BJ (cell line): ENCODE measurements at regions of chr5 and their contacts with region 1.

Region 1: GRCh38 chr5:153974131-153974812 is 64.4 kb downstream of the FAM114A2 start:
- DNase-seq: no peak
- H3K4me3 ChIP-seq: no peak overlapping the region
- H3K27me3 ChIP-seq: peaks cover 3% of the 10 kb centered on the region; the same call in 1 of the 2 replicates
- CTCF ChIP-seq: peak; percentile 75

Region 2: GRCh38 chr5:153987306-153987705 is 13.0 kb after region 1 on chr5:
- CTCF ChIA-PET with region 1: interaction called, 66 read pairs
- POLR2A ChIA-PET with region 1: no interaction called
- DNase-seq: no peak
- H3K4me3 ChIP-seq: no peak overlapping the region
- H3K27me3 ChIP-seq: no peaks in the 10 kb centered on the region
- CTCF ChIP-seq: no peak

Region 3: DNA sequence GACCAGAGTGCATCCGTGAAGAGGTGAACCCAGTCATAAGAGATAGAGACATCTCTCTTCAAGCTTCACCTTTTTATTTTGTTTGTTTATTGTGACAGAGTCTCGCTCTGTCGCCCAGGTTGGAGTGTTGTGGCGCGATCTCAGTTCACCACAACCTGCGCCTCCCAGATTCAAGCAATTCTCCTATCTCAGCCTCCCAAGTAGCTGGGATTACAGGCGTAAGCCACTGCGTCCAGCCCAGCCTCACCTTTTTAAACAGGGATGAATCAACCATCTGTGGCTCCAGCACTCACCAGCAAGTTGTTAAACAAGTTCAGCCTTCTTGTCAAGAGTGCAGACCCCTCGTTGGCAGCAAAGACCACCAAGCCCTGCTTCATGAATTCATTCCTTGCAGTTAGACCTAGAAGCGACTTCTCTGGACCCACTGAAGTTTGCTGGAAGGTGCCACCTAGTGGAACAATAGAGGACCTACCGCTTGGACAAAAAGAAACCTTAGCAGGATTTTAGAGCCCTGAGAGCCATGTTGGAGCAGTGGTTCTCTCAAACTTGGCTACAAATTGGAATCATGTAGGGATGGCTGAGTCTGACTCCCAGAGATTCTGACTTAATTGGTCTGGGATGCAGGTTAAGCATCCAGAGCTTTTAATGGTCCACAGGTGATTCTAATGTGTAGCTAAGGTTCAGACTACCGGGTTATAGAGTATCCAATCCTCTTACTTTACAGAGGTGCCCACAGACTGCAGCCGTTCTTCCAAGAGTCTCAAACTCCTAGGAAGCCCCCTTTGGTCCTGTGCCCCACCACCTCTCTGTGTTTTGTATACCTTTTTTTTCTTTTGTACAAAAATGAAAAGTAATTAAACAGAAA is 205.8 kb after region 1 on chr5:
- CTCF ChIA-PET with region 1: interaction called, 20 read pairs
- POLR2A ChIA-PET with region 1: no interaction called
- DNase-seq: no peak
- H3K4me3 ChIP-seq: no peak overlapping the region
- H3K27me3 ChIP-seq: 0 out of 2 replicates have a peak, but pooled peaks cover under 1% of the 10 kb centered on the region
- CTCF ChIP-seq: peak; percentile 87

Region 4: DNA sequence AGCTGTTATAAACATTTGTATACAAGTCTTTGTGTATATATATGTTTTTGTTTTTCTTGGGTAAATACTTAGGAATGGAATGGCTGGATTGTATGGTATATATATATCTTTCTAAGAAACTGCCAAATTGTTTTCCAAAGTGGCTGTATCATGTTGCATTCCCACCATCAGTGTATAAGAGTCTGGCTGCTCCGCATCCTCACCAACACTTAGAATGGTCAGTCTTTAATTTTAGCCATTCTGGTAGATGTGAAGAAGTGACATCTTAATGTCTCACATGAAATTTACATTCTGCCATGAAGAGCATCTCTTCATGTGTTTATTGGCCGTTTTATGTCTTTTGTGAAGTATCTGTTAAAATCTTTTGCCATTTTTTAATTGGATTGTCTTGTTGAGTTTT is 248.1 kb after region 1 on chr5:
- CTCF ChIA-PET with region 1: no interaction called
- POLR2A ChIA-PET with region 1: interaction called, 10 read pairs
- DNase-seq: no peak
- H3K4me3 ChIP-seq: no peak overlapping the region
- H3K27me3 ChIP-seq: no peaks in the 10 kb centered on the region
- CTCF ChIP-seq: no peak

Region 5: DNA sequence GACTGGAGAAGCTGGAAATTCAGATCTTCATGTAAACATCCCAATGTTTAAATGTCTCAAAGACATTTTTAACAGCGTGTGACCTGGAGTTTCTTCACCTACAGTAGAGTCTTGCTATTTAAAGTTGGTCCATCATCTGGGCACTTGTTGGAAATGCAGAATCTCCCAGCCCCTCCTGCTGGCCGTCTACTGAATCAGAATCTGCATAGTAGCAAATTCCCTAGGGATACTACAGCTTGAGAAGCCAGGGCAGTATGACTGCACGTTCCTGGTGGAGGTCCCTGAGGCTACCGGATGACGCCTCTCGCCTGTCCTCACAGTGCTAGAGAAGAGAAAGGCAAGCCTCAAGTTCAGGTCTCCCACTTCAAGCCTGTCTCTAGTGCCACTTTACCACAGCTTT is 487.3 kb after region 1 on chr5:
- CTCF ChIA-PET with region 1: interaction called, 10 read pairs
- POLR2A ChIA-PET with region 1: no interaction called
- DNase-seq: no peak
- H3K4me3 ChIP-seq: no peak overlapping the region
- H3K27me3 ChIP-seq: no peaks in the 10 kb centered on the region
- CTCF ChIP-seq: peak; percentile 32; the same call in 1 of the 2 replicates

Region 6: DNA sequence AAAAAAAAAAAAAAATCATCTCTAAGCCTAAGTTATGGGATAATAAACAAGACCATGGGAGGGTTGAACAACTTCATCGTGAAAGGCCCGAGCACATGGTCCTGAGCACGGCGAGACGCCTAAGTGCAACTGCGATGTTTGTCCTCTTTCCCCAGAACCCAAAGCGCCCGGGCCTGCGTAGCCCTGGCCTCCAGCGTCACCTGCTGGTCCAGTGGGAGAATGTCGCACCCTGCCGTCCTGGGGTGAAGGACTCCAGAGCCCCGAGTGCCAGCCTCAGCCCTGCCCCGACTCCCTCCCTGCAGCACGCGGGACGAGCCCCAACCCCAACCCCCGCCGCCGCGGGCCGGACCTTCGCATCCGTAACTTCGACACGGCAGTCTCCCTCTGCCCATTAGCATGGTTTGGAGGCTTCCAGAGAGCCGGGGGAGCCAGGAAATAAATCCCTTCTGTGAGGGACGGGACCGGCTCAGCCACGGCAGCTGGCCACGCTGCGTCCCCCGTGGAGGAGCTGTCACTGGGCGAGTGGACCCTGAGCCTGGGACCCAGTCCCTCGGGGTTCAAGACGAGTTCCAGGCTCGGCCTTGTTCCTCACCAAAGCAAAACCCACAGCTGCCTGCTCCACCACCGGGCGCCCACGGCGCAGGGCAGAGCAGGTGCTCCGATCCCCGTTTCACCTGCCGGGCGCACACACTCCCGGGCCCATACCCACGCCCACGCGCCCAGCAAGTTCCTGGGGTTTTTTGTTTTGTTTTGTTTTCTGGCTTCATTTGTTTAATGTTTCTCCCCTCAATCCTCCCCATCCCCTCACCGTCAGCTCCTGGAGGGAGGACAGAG is 636.3 kb after region 1 on chr5:
- CTCF ChIA-PET with region 1: interaction called, 10 read pairs
- POLR2A ChIA-PET with region 1: no interaction called
- DNase-seq: no peak
- H3K4me3 ChIP-seq: peak overlapping the region; percentile 27
- H3K27me3 ChIP-seq: peaks cover 15% of the 10 kb centered on the region
- CTCF ChIP-seq: peak; percentile 94